ENCODE measurements at regions of chr2 and their contacts with region 1.

Region 1: GRCh38 chr2:71100195-71100964 is 29.6 kb downstream of the MCEE start:
- DNase-seq: peak; percentile 52
- ATAC-seq: peak; percentile 71
- H3K4me3 Mint-ChIP-seq: no peak overlapping the region
- H3K27ac Mint-ChIP-seq: no peak overlapping the region
- H3K4me1 Mint-ChIP-seq: peaks cover 5% of the 10 kb centered on the region
- H3K27me3 Mint-ChIP-seq: no peaks in the 10 kb centered on the region

Region 2: DNA sequence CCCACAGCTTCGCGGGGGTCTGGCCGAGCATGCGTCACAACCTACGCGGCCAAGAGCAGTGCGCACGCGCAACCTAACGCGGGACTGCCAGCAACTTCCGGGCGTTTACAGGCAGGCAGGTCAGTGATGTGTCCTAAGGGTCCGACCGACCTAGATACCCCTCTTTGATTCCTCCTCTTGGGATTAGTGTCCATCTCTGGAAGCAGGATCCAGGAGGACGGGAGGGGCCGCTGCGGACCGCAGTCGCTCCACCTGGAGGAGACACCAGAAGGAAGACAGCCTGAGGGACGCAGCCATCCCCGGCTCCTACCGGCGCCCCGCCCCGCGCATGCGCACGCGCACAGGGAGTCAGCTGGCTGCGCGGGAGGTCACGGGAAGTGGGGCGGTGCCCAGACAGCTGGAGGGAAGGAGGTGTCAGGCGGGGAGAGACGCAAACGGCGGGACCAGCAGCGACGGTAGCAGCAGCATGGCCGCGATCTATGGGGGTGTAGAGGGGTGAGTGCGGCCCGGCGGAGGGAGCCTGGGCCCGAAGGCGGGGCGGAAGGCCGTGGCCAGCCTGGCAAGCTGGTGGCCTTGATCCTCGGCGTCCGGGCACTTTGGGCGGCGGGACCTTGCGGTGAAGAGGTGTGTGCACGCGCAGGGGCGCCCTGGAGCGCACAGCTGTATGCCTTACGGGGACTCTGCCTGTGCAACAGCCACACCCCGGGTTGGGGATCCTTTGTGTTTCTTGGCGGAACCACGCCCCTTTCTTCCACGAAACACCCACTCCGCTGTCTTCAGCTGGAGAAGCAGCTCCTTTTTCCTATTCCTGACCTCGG is 32.0 kb before region 1 on chr2 and contains the start of gene NAGK:
- CTCF ChIA-PET with region 1: interaction called, 56 read pairs
- POLR2A ChIA-PET with region 1: interaction called, 3 read pairs
- DNase-seq: peak; percentile 97
- ATAC-seq: peak; percentile 90
- H3K4me3 Mint-ChIP-seq: peak within 1 kb of the TSS; percentile 96
- H3K27ac Mint-ChIP-seq: peak within 1 kb of the TSS; percentile 99
- H3K4me1 Mint-ChIP-seq: peaks cover 56% of the 10 kb centered on the region
- H3K27me3 Mint-ChIP-seq: no peaks in the 10 kb centered on the region
- total RNA-seq, gene NAGK: 68.3 to 75.3 TPM

Region 3: GRCh38 chr2:71078624-71079023 is 21.8 kb before region 1 on chr2:
- CTCF ChIA-PET with region 1: interaction called, 11 read pairs
- POLR2A ChIA-PET with region 1: no interaction called
- DNase-seq: no peak
- ATAC-seq: no peak
- H3K4me3 Mint-ChIP-seq: no peak overlapping the region
- H3K27ac Mint-ChIP-seq: no peak overlapping the region
- H3K4me1 Mint-ChIP-seq: peaks cover 11% of the 10 kb centered on the region
- H3K27me3 Mint-ChIP-seq: no peaks in the 10 kb centered on the region

Region 4: DNA sequence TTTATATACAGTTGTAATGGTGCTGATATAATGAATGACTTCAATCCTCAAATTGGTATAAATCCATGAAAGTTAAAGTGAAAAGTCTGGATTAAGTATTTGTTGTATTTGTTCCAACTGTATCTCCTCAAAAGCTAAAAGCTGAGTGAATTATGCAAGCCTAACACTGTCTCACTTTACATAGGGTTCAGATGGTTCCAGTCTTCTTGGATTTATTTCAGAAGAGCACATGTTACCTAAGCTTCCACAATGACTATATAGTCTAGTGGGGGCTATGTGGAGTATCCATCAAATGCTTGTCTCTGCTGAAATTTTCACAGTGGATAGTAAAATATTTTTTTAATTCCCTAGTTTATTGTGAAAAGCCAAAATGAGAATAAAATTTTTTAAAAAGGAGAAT is 16.7 kb after region 1 on chr2:
- CTCF ChIA-PET with region 1: interaction called, 26 read pairs
- POLR2A ChIA-PET with region 1: no interaction called
- DNase-seq: no peak
- ATAC-seq: no peak
- H3K4me3 Mint-ChIP-seq: no peak overlapping the region
- H3K27ac Mint-ChIP-seq: no peak overlapping the region
- H3K4me1 Mint-ChIP-seq: no peaks in the 10 kb centered on the region
- H3K27me3 Mint-ChIP-seq: no peaks in the 10 kb centered on the region

Region 5: GRCh38 chr2:71154798-71155197 is 54.4 kb after region 1 on chr2:
- CTCF ChIA-PET with region 1: interaction called, 14 read pairs
- POLR2A ChIA-PET with region 1: no interaction called
- DNase-seq: peak; percentile 35
- ATAC-seq: peak; percentile 67
- H3K4me3 Mint-ChIP-seq: no peak overlapping the region
- H3K27ac Mint-ChIP-seq: no peak overlapping the region
- H3K4me1 Mint-ChIP-seq: peaks cover 6% of the 10 kb centered on the region
- H3K27me3 Mint-ChIP-seq: peaks cover 3% of the 10 kb centered on the region

Region 6: GRCh38 chr2:71190656-71191569 is 90.5 kb after region 1 on chr2:
- CTCF ChIA-PET with region 1: interaction called, 11 read pairs
- POLR2A ChIA-PET with region 1: no interaction called
- DNase-seq: no peak
- ATAC-seq: no peak
- H3K4me3 Mint-ChIP-seq: no peak overlapping the region
- H3K27ac Mint-ChIP-seq: no peak overlapping the region
- H3K4me1 Mint-ChIP-seq: no peaks in the 10 kb centered on the region
- H3K27me3 Mint-ChIP-seq: no peaks in the 10 kb centered on the region